ENCODE measurements at regions of chr11 and their contacts with region 1.

Region 1: DNA sequence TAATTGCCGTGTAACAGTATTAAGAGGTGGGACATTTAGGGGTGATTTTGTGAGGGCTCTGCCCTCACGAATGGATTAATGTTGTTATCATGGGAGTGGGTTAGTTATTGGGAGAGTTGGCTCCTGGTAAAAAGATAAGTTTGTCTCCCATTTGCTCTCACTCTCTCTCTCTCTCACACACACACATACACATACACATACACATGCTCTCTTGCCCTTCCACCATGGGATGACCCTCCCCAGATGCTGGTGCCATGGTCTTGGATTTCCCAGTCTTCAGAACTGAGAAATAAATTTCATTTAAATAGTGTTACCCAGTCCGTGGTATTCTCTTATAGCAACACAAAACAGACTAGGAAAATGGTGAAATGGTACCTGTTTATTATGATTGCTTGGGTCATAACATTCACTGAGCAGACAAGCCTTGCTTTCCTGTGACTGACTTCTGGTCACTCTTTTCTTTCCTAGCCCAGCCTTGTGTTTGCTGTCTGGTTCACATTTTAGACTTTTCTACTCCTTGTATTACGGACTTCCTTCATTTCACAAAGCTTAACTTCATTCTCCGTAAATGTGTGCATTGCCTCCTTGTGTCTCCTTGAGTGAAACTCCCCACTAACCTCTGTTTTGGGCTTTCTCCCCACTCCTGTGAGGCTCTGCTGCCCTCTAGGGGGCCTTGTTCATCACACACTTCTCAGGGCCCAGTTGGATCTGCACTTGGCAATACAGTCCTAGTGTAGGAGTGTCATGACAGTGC is 206.5 kb upstream of the CTSC start:
- DNase-seq: peak; percentile 47 to 82 (median 75)
- ATAC-seq: peak; percentile 98
- H3K4me3 ChIP-seq: no peak overlapping the region
- H3K4me3 Mint-ChIP-seq: peak overlapping the region in 3 of 10 donors; percentile 11 to 51 (median 27)
- H3K27ac ChIP-seq: no peak overlapping the region
- H3K27ac Mint-ChIP-seq: peak overlapping the region in 3 of 9 donors; percentile 26 to 50 (median 40)
- H3K4me1 ChIP-seq: peaks cover 0 to 4% of the 10 kb centered on the region in 2 donors
- H3K4me1 Mint-ChIP-seq: peaks cover 4 to 10% (median 6%) of the 10 kb centered on the region in 7 donors
- H3K27me3 ChIP-seq: no peaks in the 10 kb centered on the region
- H3K27me3 Mint-ChIP-seq: peaks cover 0 to 6% (median 0%) of the 10 kb centered on the region in 5 donors

Region 2: DNA sequence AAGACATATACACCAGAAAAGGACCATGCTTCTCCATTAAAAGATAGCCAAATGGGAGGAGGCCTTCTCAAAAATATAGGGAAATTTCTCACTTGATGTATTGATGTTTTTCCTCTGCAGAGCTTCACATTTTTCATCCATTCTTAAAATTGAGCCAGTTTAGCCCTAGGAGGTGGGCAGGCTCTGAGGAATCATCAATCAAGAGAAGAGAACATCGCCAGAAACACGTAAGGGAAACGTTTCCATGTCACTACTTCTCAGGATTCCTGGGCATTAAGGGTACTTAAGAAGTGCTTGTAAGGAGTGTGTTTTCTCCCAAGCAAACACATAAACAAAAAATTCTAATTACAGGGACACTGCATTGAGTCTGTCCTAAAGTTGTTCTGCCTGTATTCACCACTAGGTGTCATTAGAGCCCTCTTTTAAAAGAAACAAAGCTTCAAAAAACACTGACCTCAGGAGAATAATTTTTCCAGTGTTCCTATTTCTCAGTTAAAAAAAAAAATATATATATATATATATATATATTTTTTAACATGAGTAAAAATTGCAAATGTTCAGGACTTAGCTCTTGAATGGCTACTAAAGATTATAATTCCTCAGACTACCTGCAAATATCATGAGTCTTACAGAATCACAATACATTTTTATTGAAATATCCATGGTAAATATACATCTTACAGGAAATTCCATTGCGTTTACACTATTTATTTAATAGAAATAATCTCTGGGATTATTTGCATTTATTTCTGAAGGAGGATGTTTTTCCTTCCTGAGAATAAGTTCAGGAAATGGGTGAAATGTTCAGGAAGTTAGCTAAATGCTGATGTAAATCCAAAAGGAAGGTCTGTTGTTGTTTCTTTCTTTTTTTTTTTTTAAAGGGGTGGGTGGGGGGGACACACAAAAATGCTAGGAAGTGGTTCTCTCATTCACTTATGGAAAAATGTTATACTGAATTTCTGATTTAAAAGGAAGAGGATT is 1604.9 kb before region 1 on chr11:
- CTCF ChIA-PET with region 1: no interaction called
- POLR2A ChIA-PET with region 1: no interaction called
- intact Hi-C with region 1: loop called in 1 of 2 experiments (anchors 1 kb)
- DNase-seq: peak in 4 of 9 donors; percentile 24 to 34 (median 28)
- ATAC-seq: peak; percentile 64
- H3K4me3 ChIP-seq: no peak overlapping the region
- H3K4me3 Mint-ChIP-seq: no peak overlapping the region
- H3K27ac ChIP-seq: no peak overlapping the region
- H3K27ac Mint-ChIP-seq: no peak overlapping the region
- H3K4me1 ChIP-seq: no peaks in the 10 kb centered on the region
- H3K4me1 Mint-ChIP-seq: peaks cover 0 to 2% (median 0%) of the 10 kb centered on the region in 7 donors
- H3K27me3 ChIP-seq: no peaks in the 10 kb centered on the region
- H3K27me3 Mint-ChIP-seq: peaks cover 0 to 9% (median 4%) of the 10 kb centered on the region in 5 donors

Region 3: GRCh38 chr11:87722756-87723565 is 821.1 kb before region 1 on chr11:
- CTCF ChIA-PET with region 1: no interaction called
- POLR2A ChIA-PET with region 1: no interaction called
- intact Hi-C with region 1: loop called in 1 of 2 experiments (anchors 2 kb)
- DNase-seq: no peak
- ATAC-seq: no peak
- H3K4me3 ChIP-seq: no peak overlapping the region
- H3K4me3 Mint-ChIP-seq: no peak overlapping the region
- H3K27ac ChIP-seq: no peak overlapping the region
- H3K27ac Mint-ChIP-seq: no peak overlapping the region
- H3K4me1 ChIP-seq: no peaks in the 10 kb centered on the region
- H3K4me1 Mint-ChIP-seq: no peaks in the 10 kb centered on the region
- H3K27me3 ChIP-seq: no peaks in the 10 kb centered on the region
- H3K27me3 Mint-ChIP-seq: peaks cover 0 to 4% (median 0%) of the 10 kb centered on the region in 5 donors

Region 4: GRCh38 chr11:88103337-88104206 is 440.5 kb before region 1 on chr11:
- CTCF ChIA-PET with region 1: interaction called, 4 read pairs
- POLR2A ChIA-PET with region 1: no interaction called
- intact Hi-C with region 1: loop called (anchors 1 kb)
- DNase-seq: peak in 8 of 9 donors; percentile 9 to 46 (median 20)
- ATAC-seq: peak; percentile 78
- H3K4me3 ChIP-seq: no peak overlapping the region
- H3K4me3 Mint-ChIP-seq: no peak overlapping the region
- H3K27ac ChIP-seq: no peak overlapping the region
- H3K27ac Mint-ChIP-seq: no peak overlapping the region
- H3K4me1 ChIP-seq: no peaks in the 10 kb centered on the region
- H3K4me1 Mint-ChIP-seq: no peaks in the 10 kb centered on the region
- H3K27me3 ChIP-seq: peaks cover 0 to 5% of the 10 kb centered on the region in 2 donors
- H3K27me3 Mint-ChIP-seq: peaks cover 5 to 16% (median 8%) of the 10 kb centered on the region in 5 donors

Region 5: DNA sequence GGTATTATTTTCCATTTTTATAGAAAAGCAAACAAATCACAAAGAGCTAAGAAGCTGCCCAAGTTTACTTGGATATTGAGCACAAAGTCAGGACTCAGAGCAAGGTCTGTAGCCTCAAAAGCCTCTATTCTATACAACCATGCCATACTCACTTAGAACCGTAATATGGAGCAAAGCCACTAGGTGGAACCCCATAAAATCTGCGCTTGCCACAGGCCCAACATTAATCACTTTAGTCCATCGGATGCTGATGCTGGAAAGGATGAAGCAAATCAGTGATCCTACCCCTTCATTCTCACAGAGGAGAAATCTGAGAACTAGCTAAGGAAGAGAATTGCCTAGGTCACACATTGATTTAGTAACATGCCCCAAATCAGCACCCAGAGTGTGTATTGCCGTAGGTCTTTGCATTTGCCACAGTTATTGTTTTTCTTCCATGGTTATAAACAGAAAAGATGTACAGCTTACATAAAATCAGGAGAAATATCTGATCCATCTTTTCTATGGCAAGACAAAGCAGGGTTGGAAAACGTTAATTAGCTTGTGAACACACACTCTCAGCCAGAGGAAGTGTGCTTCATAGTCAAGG is 312.1 kb before region 1 on chr11:
- CTCF ChIA-PET with region 1: interaction called, 16 read pairs
- POLR2A ChIA-PET with region 1: no interaction called
- intact Hi-C with region 1: loop called (anchors 1 kb)
- DNase-seq: peak in 5 of 9 donors; percentile 1 to 50 (median 29)
- ATAC-seq: peak; percentile 65
- H3K4me3 ChIP-seq: no peak overlapping the region
- H3K4me3 Mint-ChIP-seq: no peak overlapping the region
- H3K27ac ChIP-seq: no peak overlapping the region
- H3K27ac Mint-ChIP-seq: no peak overlapping the region
- H3K4me1 ChIP-seq: no peaks in the 10 kb centered on the region
- H3K4me1 Mint-ChIP-seq: peaks cover 0 to 4% (median 0%) of the 10 kb centered on the region in 7 donors
- H3K27me3 ChIP-seq: no peaks in the 10 kb centered on the region
- H3K27me3 Mint-ChIP-seq: peaks cover 0 to 8% (median 0%) of the 10 kb centered on the region in 5 donors

Region 6: GRCh38 chr11:88484873-88485621 is 59.0 kb before region 1 on chr11:
- CTCF ChIA-PET with region 1: no interaction called
- POLR2A ChIA-PET with region 1: no interaction called
- intact Hi-C with region 1: loop called in 1 of 2 experiments (anchors 5 kb)
- DNase-seq: peak in 3 of 9 donors; percentile 14 to 24 (median 21)
- ATAC-seq: peak; percentile 89
- H3K4me3 ChIP-seq: no peak overlapping the region
- H3K4me3 Mint-ChIP-seq: no peak overlapping the region
- H3K27ac ChIP-seq: no peak overlapping the region
- H3K27ac Mint-ChIP-seq: no peak overlapping the region
- H3K4me1 ChIP-seq: no peaks in the 10 kb centered on the region
- H3K4me1 Mint-ChIP-seq: peaks cover 0 to 4% (median 0%) of the 10 kb centered on the region in 7 donors
- H3K27me3 ChIP-seq: no peaks in the 10 kb centered on the region
- H3K27me3 Mint-ChIP-seq: peaks cover 0 to 9% (median 0%) of the 10 kb centered on the region in 5 donors

Region 7: DNA sequence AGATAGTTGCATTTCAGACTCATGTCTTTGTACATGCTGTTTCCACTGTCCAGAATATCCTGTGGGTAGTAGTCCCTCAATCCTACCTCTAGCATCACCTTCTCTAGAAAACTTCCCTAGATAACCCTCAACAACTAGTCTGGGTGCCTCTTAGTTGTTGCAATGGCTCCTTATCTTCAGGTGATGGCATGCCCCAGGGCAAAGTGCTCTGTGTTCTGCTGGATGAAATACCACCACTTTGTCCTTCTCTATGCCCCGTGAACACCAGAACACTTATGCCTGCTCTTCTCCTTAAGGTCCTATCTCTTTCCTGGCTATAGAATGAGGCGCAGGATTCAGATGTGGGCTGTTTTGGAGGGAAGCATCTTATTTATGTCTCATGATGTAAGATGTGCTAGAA is 48.2 kb before region 1 on chr11:
- CTCF ChIA-PET with region 1: no interaction called
- POLR2A ChIA-PET with region 1: no interaction called
- intact Hi-C with region 1: no loop called
- DNase-seq: no peak
- ATAC-seq: no peak
- H3K4me3 ChIP-seq: no peak overlapping the region
- H3K4me3 Mint-ChIP-seq: no peak overlapping the region
- H3K27ac ChIP-seq: no peak overlapping the region
- H3K27ac Mint-ChIP-seq: no peak overlapping the region
- H3K4me1 ChIP-seq: no peaks in the 10 kb centered on the region
- H3K4me1 Mint-ChIP-seq: no peaks in the 10 kb centered on the region
- H3K27me3 ChIP-seq: no peaks in the 10 kb centered on the region
- H3K27me3 Mint-ChIP-seq: peaks cover 0 to 31% (median under 1%) of the 10 kb centered on the region in 5 donors